ENCODE measurements at regions of chr2 and their contacts with region 1.

Region 1: DNA sequence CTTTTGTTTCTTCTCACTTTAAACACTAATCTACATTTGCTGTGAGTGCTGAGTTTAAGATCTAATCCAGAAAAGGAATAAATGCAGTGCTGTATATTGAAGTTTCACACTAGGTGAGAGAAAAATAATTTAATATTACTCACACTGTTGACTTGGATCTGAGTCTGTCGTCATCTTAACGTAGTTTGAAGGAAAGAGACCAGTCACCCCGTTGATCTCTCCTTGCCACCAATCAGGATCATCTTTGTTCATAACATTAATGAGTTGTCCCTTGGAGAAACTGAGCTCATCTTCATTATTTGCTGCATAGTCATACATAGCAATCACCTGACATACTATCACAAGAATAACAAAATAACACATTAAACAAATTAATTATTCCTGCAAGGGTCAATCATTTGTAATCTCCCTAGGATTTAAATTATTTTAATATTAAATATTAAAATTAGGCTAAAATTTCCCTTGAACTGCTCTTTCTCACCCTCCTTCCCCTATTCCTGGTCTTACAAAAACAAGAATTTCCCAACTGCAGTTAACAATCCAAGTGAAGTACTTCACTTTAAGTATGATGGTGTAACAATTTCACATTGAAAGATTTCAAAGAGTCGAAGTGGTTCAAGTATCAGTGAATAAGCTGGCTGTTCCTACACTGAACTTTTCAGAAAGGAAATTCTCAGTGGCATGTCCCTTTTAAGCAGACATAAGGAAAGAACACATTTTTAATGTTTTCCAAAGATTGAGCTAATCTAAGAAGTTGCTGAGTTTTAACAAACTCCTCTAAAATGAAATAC is 71.3 kb downstream of the FAM228A start:
- DNase-seq: no peak
- ATAC-seq: no peak
- H3K4me3 ChIP-seq: no peak overlapping the region
- H3K27ac ChIP-seq: no peak overlapping the region
- H3K4me1 ChIP-seq: no peaks in the 10 kb centered on the region
- H3K27me3 ChIP-seq: no peaks in the 10 kb centered on the region
- CTCF ChIP-seq: no peak

Region 2: GRCh38 chr2:23954325-23955014 is 291.7 kb before region 1 on chr2:
- CTCF ChIA-PET with region 1: no interaction called
- POLR2A ChIA-PET with region 1: interaction called, 12 read pairs
- in situ Hi-C with region 1: no loop called
- intact Hi-C with region 1: no loop called
- DNase-seq: no peak
- ATAC-seq: no peak
- H3K4me3 ChIP-seq: no peak overlapping the region
- H3K27ac ChIP-seq: no peak overlapping the region
- H3K4me1 ChIP-seq: no peaks in the 10 kb centered on the region
- H3K27me3 ChIP-seq: no peaks in the 10 kb centered on the region
- CTCF ChIP-seq: no peak

Measured in Panc1 (cell line).